ENCODE measurements at regions of chr6 and their contacts with region 1.

Region 1: DNA sequence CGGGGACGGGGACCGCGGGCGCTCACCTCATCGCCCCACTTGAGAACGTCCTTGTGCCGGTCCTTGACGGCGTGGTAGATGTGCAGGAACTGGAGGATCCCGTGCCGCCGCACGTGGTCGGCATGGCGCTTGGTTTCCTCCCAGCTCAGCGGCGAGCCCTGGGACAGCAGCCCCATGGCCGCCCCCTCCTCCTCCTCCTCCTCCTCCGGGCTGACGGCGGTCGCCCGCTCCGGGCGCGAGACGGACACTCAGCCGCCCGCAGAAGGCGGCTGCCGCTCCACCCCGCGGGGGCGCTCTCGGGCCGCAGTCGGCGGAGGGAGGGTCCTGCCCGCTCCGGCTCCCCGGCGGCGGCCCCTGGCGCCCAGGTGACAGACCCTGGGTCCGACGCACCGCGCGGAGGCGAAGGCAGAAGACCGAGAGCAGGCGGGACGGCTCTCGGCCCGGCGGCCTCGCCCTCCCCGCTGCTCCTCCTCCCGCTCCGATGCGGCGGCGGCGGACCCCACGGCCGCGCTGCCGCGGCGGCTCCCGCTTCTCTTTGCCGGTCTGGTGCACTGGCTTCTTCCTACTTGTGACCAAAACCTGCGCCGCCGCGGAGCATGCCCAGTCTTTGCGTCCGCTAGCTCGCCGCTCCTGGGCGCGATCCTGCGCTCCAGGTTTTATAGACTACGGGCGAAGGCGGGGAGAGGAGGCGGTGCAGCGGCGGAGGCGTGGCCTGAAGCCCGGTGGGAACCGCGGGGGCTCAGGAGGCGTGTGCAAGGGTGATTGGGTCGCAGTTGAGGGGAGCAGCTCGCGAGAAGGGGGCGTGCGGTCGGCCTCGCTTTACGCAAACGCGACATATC is at the start of gene GCLC:
- DNase-seq: peak; percentile 87
- ATAC-seq: peak; percentile 71
- H3K4me3 Mint-ChIP-seq: peak within 1 kb of the TSS; percentile 93
- H3K27ac Mint-ChIP-seq: peak within 1 kb of the TSS; percentile 91
- H3K4me1 Mint-ChIP-seq: peaks cover 67% of the 10 kb centered on the region
- H3K27me3 Mint-ChIP-seq: no peaks in the 10 kb centered on the region
- CTCF ChIP-seq: peak; percentile 37
- total RNA-seq, gene GCLC: 26.6 and 27.1 TPM in 2 replicates

Region 2: GRCh38 chr6:53064726-53065215 is 479.9 kb before region 1 on chr6:
- CTCF ChIA-PET with region 1: no interaction called
- POLR2A ChIA-PET with region 1: no interaction called
- intact Hi-C with region 1: loop called (anchors 1 kb)
- DNase-seq: peak; percentile 82
- ATAC-seq: peak; percentile 81
- H3K4me3 Mint-ChIP-seq: peak overlapping the region; percentile 100
- H3K27ac Mint-ChIP-seq: peak overlapping the region; percentile 99
- H3K4me1 Mint-ChIP-seq: peaks cover 57% of the 10 kb centered on the region
- H3K27me3 Mint-ChIP-seq: no peaks in the 10 kb centered on the region
- CTCF ChIP-seq: no peak

Region 3: GRCh38 chr6:53492860-53493634 is 51.6 kb before region 1 on chr6:
- CTCF ChIA-PET with region 1: interaction called, 3 read pairs
- POLR2A ChIA-PET with region 1: no interaction called
- intact Hi-C with region 1: loop called (anchors 5 kb)
- DNase-seq: no peak
- ATAC-seq: peak; percentile 14
- H3K4me3 Mint-ChIP-seq: no peak overlapping the region
- H3K27ac Mint-ChIP-seq: no peak overlapping the region
- H3K4me1 Mint-ChIP-seq: peaks cover 5% of the 10 kb centered on the region
- H3K27me3 Mint-ChIP-seq: no peaks in the 10 kb centered on the region
- CTCF ChIP-seq: peak; percentile 64

Region 4: GRCh38 chr6:53530346-53530745 is 14.3 kb before region 1 on chr6:
- CTCF ChIA-PET with region 1: no interaction called
- POLR2A ChIA-PET with region 1: no interaction called
- intact Hi-C with region 1: loop called (anchors 2 kb)
- DNase-seq: no peak
- ATAC-seq: no peak
- H3K4me3 Mint-ChIP-seq: no peak overlapping the region
- H3K27ac Mint-ChIP-seq: no peak overlapping the region
- H3K4me1 Mint-ChIP-seq: peaks cover 24% of the 10 kb centered on the region
- H3K27me3 Mint-ChIP-seq: no peaks in the 10 kb centered on the region
- CTCF ChIP-seq: no peak

Region 5: GRCh38 chr6:53718597-53719460 is 174.1 kb after region 1 on chr6:
- CTCF ChIA-PET with region 1: interaction called, 3 read pairs
- POLR2A ChIA-PET with region 1: no interaction called
- intact Hi-C with region 1: loop called (anchors 2 kb)
- DNase-seq: no peak
- ATAC-seq: peak; percentile 81
- H3K4me3 Mint-ChIP-seq: no peak overlapping the region
- H3K27ac Mint-ChIP-seq: no peak overlapping the region
- H3K4me1 Mint-ChIP-seq: peaks cover 5% of the 10 kb centered on the region
- H3K27me3 Mint-ChIP-seq: peaks cover 13% of the 10 kb centered on the region
- CTCF ChIP-seq: peak; percentile 59

Region 6: GRCh38 chr6:53794720-53795253 is 250.1 kb after region 1 on chr6 and contains the start of gene LRRC1:
- CTCF ChIA-PET with region 1: no interaction called
- POLR2A ChIA-PET with region 1: interaction called, 8 read pairs
- intact Hi-C with region 1: loop called (anchors 1 kb)
- DNase-seq: peak; percentile 94
- ATAC-seq: peak; percentile 76
- H3K4me3 Mint-ChIP-seq: peak within 1 kb of the TSS; percentile 99
- H3K27ac Mint-ChIP-seq: peak within 1 kb of the TSS; percentile 91
- H3K4me1 Mint-ChIP-seq: peaks cover 27% of the 10 kb centered on the region
- H3K27me3 Mint-ChIP-seq: peaks cover 2% of the 10 kb centered on the region
- CTCF ChIP-seq: no peak
- total RNA-seq, gene LRRC1: 3.0 and 4.7 TPM in 2 replicates